Naive thymus-derived CD8-positive, alpha-beta T cell (primary cell): ENCODE measurements at regions of chr1 and their contacts with region 1.

Region 1: GRCh38 chr1:154961497-154962262 is at the start of gene PYGO2:
- DNase-seq: peak in 9 of 10 donors; percentile 71 to 93 (median 75)
- ATAC-seq: peak; percentile 77 to 82
- H3K4me3 Mint-ChIP-seq: peak within 1 kb of the TSS; percentile 84 to 98 (median 96)
- H3K27ac Mint-ChIP-seq: peak within 1 kb of the TSS; percentile 92 to 99 (median 97)
- H3K4me1 Mint-ChIP-seq: peaks cover 14 to 53% (median 45%) of the 10 kb centered on the region in 4 donors
- H3K27me3 Mint-ChIP-seq: no peaks in the 10 kb centered on the region
- polyA plus RNA-seq, gene PYGO2: 21.5 to 50.8 (median 35.8) TPM

Region 2: GRCh38 chr1:154747740-154748404 is 213.8 kb before region 1 on chr1:
- POLR2A ChIA-PET with region 1: no interaction called
- DNase-seq: peak in 8 of 10 donors; percentile 23 to 57 (median 36)
- ATAC-seq: peak; percentile 90 to 96
- H3K4me3 Mint-ChIP-seq: peak overlapping the region; percentile 61 to 85 (median 76)
- H3K27ac Mint-ChIP-seq: peak overlapping the region; percentile 71 to 94 (median 88)
- H3K4me1 Mint-ChIP-seq: peaks cover 33 to 49% (median 45%) of the 10 kb centered on the region in 4 donors
- H3K27me3 Mint-ChIP-seq: no peaks in the 10 kb centered on the region

Region 3: GRCh38 chr1:154936555-154937084 is 25.1 kb before region 1 on chr1 and contains the start of gene PMVK:
- POLR2A ChIA-PET with region 1: interaction called, 87 read pairs
- DNase-seq: peak in 9 of 10 donors; percentile 84 to 98 (median 95)
- ATAC-seq: peak; percentile 76 to 83
- H3K4me3 Mint-ChIP-seq: peak within 1 kb of the TSS; percentile 86 to 100 (median 98)
- H3K27ac Mint-ChIP-seq: peak within 1 kb of the TSS; percentile 98 to 100 (median 99)
- H3K4me1 Mint-ChIP-seq: peaks cover 20 to 64% (median 53%) of the 10 kb centered on the region in 4 donors
- H3K27me3 Mint-ChIP-seq: no peaks in the 10 kb centered on the region
- polyA plus RNA-seq, gene PMVK: 41.0 to 45.7 (median 45.1) TPM

Region 4: GRCh38 chr1:154974063-154974807 is 12.6 kb after region 1 on chr1 and contains the start of gene CKS1B:
- POLR2A ChIA-PET with region 1: interaction called, 85 read pairs
- DNase-seq: peak; percentile 86 to 99 (median 98)
- ATAC-seq: peak; percentile 88 to 90
- H3K4me3 Mint-ChIP-seq: no peak within 1 kb of the TSS
- H3K27ac Mint-ChIP-seq: no peak within 1 kb of the TSS
- H3K4me1 Mint-ChIP-seq: peaks cover 16 to 33% (median 30%) of the 10 kb centered on the region in 4 donors
- H3K27me3 Mint-ChIP-seq: no peaks in the 10 kb centered on the region
- polyA plus RNA-seq, gene CKS1B: 58.0 to 66.6 (median 63.0) TPM

Region 5: GRCh38 chr1:154982897-154983648 is 21.4 kb after region 1 on chr1 and contains the start of gene FLAD1:
- POLR2A ChIA-PET with region 1: interaction called, 11 read pairs
- DNase-seq: peak; percentile 84 to 98 (median 94)
- ATAC-seq: peak; percentile 99 to 100
- H3K4me3 Mint-ChIP-seq: no peak within 1 kb of the TSS
- H3K27ac Mint-ChIP-seq: peak within 1 kb of the TSS in 1 of 10 donors; percentile 63
- H3K4me1 Mint-ChIP-seq: peaks cover 0 to 21% (median 2%) of the 10 kb centered on the region in 4 donors
- H3K27me3 Mint-ChIP-seq: no peaks in the 10 kb centered on the region
- polyA plus RNA-seq, gene FLAD1: 30.9 to 41.8 (median 31.9) TPM

Region 6: DNA sequence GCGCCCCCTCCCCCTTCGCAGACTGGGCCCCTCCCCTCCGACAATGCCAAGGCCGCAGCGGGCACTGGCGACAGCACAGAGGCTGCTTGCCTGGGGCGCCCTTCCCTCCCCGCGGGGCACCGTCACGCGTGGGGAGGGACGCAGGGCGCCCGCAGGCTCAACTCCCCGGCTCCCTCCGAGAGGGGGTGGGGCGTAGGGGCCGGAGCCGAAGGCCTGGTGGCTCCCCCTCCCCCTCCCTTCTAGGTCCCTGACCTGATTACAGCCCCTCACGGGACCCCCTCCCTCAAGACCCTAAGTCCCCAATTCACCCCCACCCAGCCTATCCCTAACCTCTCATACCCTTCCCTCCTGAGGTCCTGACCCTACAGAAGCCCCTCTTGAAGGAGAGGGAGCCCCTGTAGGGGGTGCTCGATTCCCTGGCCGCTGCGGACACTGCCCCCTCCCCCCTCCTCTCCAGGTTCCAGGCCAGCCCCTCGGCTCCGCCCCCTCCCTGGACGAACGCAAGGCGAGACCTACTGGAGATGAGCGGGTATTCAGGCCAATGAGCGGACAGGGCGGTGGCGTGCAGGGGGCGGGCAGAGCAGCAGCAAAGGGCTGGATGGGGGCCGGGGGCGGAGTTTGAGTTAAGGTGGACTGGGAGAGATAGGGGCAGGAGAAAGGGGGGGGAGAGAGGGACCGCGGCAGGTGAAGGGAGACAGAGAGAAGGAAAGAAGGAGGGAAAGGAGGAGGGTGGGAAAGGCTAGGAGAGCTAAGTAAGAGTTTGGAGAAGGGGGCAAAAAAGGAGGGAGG is 40.2 kb after region 1 on chr1:
- POLR2A ChIA-PET with region 1: interaction called, 29 read pairs
- DNase-seq: peak; percentile 89 to 98 (median 92)
- ATAC-seq: peak; percentile 71 to 80
- H3K4me3 Mint-ChIP-seq: peak overlapping the region; percentile 82 to 94 (median 90)
- H3K27ac Mint-ChIP-seq: peak overlapping the region; percentile 66 to 92 (median 87)
- H3K4me1 Mint-ChIP-seq: peaks cover 34 to 80% (median 57%) of the 10 kb centered on the region in 4 donors
- H3K27me3 Mint-ChIP-seq: peaks cover 0 to 6% (median 0%) of the 10 kb centered on the region in 5 donors